ENCODE measurements at regions of chr19 and their contacts with region 1.

Region 1: DNA sequence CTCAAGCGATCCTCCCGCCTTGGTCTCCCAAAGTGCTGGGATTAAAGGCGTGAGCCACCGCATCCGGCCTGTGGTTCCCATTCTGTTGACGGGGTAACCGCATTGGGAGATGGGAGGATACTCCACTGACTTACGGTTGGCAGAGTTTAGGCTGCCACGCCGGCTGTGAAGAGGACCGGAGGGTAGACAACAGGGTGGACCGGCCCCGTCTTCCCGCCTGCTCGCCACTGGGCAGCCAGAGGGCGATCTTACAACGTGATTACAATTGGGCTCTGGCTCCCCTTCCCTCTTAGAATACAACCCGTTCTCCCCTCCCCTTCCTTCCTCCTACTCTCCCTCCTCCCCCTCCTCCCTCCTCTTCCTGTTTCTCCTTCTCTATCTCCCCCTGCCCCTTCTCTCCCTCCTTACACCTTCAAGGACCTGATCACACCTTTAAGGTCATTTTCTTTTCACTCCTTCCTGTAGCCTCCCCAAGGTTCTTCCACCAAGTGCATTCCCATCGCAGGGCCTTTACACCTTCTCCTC is 957 bp upstream of the CCDC194 start:
- DNase-seq: peak; percentile 86
- ATAC-seq: peak; percentile 61

Region 2: GRCh38 chr19:17469481-17470067 is 74.6 kb after region 1 on chr19:
- intact Hi-C with region 1: loop called (anchors 5 kb)
- DNase-seq: peak; percentile 97
- ATAC-seq: peak; percentile 78